Activated CD4-positive, alpha-beta T cell treated with anti-CD3 and anti-CD28 coated beads for 36 hours (primary cell): ENCODE measurements at regions of chr19 and their contacts with region 1.

Region 1: DNA sequence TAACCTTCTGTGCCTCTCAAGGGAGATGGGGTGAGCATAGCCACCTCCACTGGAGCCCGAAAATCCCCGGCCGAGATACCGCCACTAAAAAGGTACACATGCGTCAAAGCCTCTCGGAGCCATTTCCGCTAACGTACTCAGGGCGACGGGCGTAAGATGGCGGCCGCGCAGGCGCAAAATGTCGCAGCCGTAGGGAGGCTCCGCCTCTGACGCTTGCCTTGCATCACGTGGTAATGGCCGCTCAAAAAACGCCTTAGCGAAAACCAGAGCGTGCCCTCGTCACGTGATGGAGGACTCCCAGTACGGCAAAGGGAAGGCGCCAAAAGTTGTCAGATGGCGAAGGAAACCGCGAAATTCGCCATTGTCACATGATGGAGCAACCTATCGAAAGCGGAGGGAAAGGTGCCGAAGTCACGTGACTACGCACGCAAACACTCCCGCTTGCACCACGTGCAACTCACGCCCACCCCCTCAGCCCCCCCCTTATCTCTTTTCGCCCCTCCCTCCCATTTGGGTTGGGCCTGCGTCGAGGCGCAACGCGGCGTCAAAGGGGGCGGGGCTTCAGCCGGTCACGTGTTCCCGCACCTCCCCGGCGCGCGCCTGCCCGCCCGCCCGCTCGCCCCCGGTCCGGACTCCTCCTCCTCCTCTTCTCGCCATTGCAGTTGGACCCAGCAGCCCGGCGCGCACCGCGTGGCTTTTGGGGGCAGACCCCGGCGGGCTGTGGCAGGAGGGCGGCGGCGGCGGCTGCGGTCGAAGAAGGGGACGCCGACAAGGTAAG is at the start of gene ILF3:
- DNase-seq: peak; percentile 100
- ATAC-seq: peak; percentile 82
- H3K4me3 Mint-ChIP-seq: peak within 1 kb of the TSS; percentile 86
- H3K27ac Mint-ChIP-seq: peak within 1 kb of the TSS; percentile 97
- H3K4me1 Mint-ChIP-seq: peaks cover 34% of the 10 kb centered on the region
- H3K27me3 Mint-ChIP-seq: no peaks in the 10 kb centered on the region
- total RNA-seq, gene ILF3: 433 to 570 TPM

Region 2: GRCh38 chr19:10251792-10252694 is 401.9 kb before region 1 on chr19 and contains the start of gene MRPL4:
- CTCF ChIA-PET with region 1: no interaction called
- POLR2A ChIA-PET with region 1: no interaction called
- intact Hi-C with region 1: loop called in 1 of 2 experiments (anchors 1 kb)
- DNase-seq: peak; percentile 97
- ATAC-seq: peak; percentile 99
- H3K4me3 Mint-ChIP-seq: peak within 1 kb of the TSS; percentile 97
- H3K27ac Mint-ChIP-seq: peak within 1 kb of the TSS; percentile 97
- H3K4me1 Mint-ChIP-seq: peaks cover 18% of the 10 kb centered on the region
- H3K27me3 Mint-ChIP-seq: no peaks in the 10 kb centered on the region
- total RNA-seq, gene MRPL4: 130 to 140 TPM

Region 3: GRCh38 chr19:10502524-10503001 is 151.3 kb before region 1 on chr19:
- CTCF ChIA-PET with region 1: no interaction called
- POLR2A ChIA-PET with region 1: interaction called, 8 read pairs
- intact Hi-C with region 1: loop called (anchors 1 to 5 kb)
- DNase-seq: peak; percentile 95
- ATAC-seq: peak; percentile 91
- H3K4me3 Mint-ChIP-seq: peak overlapping the region; percentile 91
- H3K27ac Mint-ChIP-seq: peak overlapping the region; percentile 95
- H3K4me1 Mint-ChIP-seq: peaks cover 30% of the 10 kb centered on the region
- H3K27me3 Mint-ChIP-seq: no peaks in the 10 kb centered on the region

Region 4: GRCh38 chr19:10695401-10696398 is 41.8 kb after region 1 on chr19:
- CTCF ChIA-PET with region 1: interaction called, 15 read pairs
- POLR2A ChIA-PET with region 1: interaction called, 3 read pairs
- intact Hi-C with region 1: loop called (anchors 1 to 2 kb)
- DNase-seq: peak; percentile 95
- ATAC-seq: peak; percentile 99
- H3K4me3 Mint-ChIP-seq: peak overlapping the region; percentile 59
- H3K27ac Mint-ChIP-seq: no peak overlapping the region
- H3K4me1 Mint-ChIP-seq: peaks cover 13% of the 10 kb centered on the region
- H3K27me3 Mint-ChIP-seq: no peaks in the 10 kb centered on the region

Region 5: DNA sequence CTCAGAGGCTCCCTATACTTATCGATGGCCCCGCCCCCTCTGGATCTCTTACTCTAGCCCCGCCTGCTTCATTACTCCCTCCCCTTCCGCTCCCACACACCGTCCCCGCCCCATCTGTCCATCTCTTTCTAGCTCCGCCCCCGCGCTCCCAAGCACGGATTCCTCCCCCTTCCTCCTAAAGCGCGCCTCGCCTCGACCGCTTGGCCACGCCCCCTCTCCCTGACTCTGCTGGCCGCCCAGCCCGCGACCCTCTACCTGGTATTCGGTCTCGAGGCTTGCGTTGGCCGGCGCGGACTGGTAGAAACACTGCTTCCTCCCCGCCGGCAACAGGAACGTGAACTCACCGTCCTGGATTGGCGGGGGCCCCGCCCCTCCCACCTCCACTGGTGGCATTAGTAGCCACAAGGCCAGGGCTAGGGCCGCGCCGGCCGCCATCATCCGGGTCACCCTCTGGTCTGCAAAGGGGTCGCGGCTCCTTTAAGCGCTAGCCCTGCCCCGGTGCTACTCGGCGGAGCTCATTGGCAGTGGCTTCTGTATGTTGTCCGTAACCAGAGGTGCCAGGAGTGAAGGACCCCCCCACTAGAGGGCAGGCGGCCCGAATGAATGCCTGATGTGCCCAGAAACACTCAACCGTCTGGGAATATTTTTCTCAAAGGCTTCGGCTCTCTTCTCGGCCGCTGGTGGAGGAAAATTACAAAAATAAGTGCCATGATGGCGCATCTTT is 182.0 kb after region 1 on chr19 and contains the start of gene TMED1:
- CTCF ChIA-PET with region 1: no interaction called
- POLR2A ChIA-PET with region 1: no interaction called
- intact Hi-C with region 1: loop called in 1 of 2 experiments (anchors 1 kb)
- DNase-seq: peak; percentile 99
- ATAC-seq: peak; percentile 93
- H3K4me3 Mint-ChIP-seq: peak within 1 kb of the TSS; percentile 94
- H3K27ac Mint-ChIP-seq: peak within 1 kb of the TSS; percentile 99
- H3K4me1 Mint-ChIP-seq: peaks cover 15% of the 10 kb centered on the region
- H3K27me3 Mint-ChIP-seq: no peaks in the 10 kb centered on the region
- total RNA-seq, gene TMED1: 8.7 to 15.3 TPM